HEK293 (cell line): ENCODE measurements at regions of chr19 and their contacts with region 1.

Region 1: DNA sequence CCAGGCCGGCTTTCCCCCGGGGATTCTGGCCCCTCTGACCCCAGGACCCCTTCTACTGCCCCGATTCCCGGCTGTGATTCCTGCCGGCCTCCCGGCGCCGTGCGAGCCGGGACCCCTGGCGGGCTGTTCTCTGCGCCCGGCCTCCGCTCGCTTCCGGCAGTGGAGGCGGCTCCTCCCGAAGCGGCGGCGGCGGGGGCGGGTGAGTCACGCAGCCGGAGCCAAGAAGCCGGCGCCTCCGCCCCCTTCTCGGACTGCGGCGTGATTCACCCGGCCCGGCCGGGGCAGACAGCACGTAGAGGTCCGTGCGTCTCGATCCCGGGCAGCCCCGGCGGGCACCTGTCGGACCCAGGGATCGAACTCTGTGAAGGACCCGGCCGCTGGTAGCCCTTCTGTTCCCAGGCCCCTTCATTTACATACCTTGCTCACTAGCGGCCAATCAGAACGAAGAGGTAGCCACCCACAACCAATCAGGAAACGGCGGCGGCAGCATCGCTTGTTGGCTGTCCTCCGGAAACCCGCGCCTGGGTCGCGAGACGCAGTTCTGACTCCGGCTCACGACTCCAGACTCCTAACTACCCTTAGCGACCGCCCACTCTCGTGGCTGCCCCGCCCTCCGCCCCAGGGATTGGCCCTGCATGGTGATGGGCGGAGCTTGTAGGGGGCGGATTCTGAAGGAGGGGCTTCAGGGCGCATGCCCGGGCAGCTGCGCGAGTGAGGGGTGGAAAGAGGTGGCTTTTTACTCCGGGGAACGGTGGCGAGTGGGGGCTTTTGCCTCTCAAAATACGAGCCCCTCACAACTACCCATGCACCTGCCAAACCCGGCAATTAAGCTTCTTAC is at the start of gene SERTAD1:
- H3K4me3 ChIP-seq: peak within 1 kb of the TSS; percentile 67
- H3K27ac ChIP-seq: peak within 1 kb of the TSS; percentile 97
- H3K4me1 ChIP-seq: peaks cover 19% of the 10 kb centered on the region
- CTCF ChIP-seq: peak; percentile 98

Region 2: GRCh38 chr19:39679056-39679790 is 746.4 kb before region 1 on chr19:
- CTCF ChIA-PET with region 1: no interaction called
- POLR2A ChIA-PET with region 1: no interaction called
- H3K4me3 ChIP-seq: no peak overlapping the region
- H3K27ac ChIP-seq: no peak overlapping the region
- H3K4me1 ChIP-seq: peaks cover 5% of the 10 kb centered on the region; the same call in 1 of the 2 replicates
- CTCF ChIP-seq: no peak

Region 3: DNA sequence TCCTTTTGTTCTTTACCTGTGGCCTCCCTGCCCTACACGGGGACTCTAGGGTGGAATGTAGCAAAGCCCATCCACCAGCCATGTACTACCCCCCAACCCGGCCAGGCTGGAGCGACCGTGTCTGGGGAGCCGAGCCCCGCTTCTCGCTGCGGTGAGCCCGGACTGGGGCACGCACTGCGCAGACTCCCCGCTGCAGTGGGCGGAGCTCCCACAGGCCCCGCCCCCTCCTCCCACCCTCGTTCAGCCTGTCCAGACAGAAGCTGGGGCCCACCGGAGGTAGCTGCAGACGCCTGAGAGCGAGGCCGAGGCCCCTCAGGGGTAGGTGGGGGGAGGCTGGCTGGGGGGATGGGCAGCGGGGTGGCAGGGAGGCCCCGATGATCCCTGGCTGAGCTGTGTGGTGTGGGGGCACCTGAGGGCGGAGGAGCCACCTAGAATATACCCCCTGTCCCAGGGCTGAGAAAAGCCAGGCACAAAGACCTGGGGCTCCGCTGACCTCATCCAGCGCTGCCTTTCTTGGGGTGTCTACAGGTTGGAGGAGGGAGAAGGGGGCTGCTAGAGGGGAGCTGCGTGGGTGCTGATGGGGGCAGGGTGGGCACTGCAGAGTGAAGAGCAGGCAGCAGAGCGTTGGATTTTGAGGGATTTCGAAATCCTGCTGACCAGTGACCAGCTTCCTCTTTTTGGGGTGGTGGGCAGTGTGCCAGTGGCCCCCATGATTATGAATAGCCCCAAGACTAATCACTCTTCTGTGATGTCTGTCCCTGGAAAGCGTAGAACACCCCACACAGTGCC is 59.9 kb before region 1 on chr19:
- CTCF ChIA-PET with region 1: interaction called, 15 read pairs
- POLR2A ChIA-PET with region 1: interaction called, 18 read pairs
- H3K4me3 ChIP-seq: peak overlapping the region; percentile 41
- H3K27ac ChIP-seq: peak overlapping the region; percentile 54; the same call in 1 of the 2 replicates
- H3K4me1 ChIP-seq: peaks cover 27% of the 10 kb centered on the region
- CTCF ChIP-seq: no peak

Region 4: DNA sequence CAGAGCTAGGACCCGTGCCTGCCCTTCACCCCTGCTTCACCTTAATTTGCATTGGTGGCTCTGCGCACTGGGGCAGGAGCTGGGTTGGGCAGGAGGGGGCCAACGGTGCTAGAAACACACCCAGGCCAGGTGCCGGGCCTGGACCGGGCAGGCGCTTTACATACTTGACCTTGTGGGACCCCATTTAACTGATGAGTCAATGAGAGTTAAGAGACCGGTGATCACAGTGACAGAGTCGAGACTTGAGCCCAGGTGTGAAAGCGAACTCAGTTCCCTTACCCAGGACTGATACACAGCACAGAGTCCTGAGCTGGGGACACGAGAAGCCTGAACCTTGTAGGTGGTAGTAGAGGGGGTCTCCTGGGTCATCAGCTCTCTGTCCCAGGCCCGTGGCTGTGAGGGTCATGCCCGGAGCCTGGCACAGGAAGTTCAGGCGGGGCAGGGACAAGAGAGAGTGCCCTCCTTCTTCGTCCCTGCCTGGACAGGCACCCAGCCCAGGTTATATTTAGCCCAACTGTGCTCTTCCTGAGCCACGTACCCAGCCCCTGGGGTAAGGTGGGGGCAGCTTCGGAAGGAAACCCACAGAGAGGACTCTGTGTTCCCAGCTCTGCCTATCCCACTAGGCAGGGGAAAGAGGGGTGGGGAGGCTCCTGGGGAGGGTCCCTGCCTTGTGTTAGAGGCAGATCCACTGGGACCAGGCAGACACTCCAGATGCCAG is 14.4 kb before region 1 on chr19:
- CTCF ChIA-PET with region 1: interaction called, 37 read pairs
- POLR2A ChIA-PET with region 1: interaction called, 38 read pairs
- H3K4me3 ChIP-seq: no peak overlapping the region
- H3K27ac ChIP-seq: no peak overlapping the region
- H3K4me1 ChIP-seq: no peaks in the 10 kb centered on the region
- CTCF ChIP-seq: no peak

Region 5: DNA sequence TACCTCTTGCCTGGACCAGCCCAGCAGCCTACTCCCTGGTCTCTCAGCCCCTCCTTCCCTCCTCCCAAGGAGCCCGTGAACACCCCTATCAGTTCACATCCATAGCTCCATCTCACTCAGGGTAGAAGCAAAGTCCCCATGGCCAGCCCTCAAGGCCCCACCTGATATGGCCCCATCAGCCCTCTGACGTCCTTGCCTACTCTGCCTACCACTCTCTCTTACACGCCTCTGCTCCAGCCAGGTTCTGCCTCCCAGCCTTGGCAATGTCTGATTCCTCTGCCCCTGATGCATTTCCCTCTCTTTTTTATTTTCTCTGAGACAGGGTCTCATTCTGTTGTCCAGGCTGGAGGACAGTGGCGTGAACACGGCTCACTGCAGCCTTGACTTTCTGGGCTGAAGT is 26.3 kb after region 1 on chr19:
- CTCF ChIA-PET with region 1: interaction called, 10 read pairs
- POLR2A ChIA-PET with region 1: interaction called, 428 read pairs
- H3K4me3 ChIP-seq: no peak overlapping the region
- H3K27ac ChIP-seq: no peak overlapping the region
- H3K4me1 ChIP-seq: no peaks in the 10 kb centered on the region
- CTCF ChIP-seq: no peak

Region 6: DNA sequence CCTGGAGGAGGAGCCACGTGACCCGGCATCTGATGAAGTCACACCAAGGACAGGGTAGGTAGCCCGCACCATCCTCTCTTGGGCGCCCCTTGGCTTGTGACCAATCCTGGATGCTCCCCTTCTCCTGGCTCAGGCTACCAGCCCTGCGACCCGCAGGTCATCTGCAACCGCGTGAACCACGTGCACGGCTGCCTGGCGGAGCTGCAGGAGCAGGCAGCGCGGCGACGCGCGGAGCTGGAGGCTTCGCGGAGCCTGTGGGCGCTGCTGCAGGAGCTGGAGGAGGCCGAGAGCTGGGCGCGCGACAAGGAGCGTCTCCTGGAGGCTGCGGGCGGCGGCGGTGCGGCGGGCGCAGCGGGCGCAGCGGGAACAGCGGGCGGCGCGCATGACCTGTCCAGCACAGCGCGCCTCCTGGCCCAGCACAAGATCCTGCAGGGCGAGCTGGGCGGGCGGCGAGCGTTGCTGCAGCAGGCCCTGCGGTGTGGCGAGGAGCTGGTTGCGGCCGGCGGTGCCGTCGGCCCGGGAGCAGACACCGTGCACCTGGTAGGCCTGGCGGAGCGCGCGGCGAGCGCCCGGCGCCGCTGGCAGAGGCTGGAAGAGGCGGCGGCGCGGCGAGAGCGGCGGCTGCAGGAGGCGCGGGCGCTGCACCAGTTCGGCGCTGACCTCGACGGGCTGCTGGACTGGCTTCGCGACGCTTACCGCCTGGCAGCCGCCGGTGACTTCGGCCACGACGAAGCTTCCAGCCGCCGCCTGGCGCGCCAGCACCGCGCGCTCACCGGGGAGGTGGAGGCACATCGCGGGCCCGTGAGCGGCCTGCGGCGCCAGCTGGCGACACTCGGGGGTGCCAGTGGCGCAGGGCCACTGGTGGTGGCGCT is 87.0 kb after region 1 on chr19:
- CTCF ChIA-PET with region 1: interaction called, 5 read pairs
- POLR2A ChIA-PET with region 1: interaction called, 10 read pairs
- H3K4me3 ChIP-seq: no peak overlapping the region
- H3K27ac ChIP-seq: no peak overlapping the region
- H3K4me1 ChIP-seq: no peaks in the 10 kb centered on the region
- CTCF ChIP-seq: no peak

Region 7: DNA sequence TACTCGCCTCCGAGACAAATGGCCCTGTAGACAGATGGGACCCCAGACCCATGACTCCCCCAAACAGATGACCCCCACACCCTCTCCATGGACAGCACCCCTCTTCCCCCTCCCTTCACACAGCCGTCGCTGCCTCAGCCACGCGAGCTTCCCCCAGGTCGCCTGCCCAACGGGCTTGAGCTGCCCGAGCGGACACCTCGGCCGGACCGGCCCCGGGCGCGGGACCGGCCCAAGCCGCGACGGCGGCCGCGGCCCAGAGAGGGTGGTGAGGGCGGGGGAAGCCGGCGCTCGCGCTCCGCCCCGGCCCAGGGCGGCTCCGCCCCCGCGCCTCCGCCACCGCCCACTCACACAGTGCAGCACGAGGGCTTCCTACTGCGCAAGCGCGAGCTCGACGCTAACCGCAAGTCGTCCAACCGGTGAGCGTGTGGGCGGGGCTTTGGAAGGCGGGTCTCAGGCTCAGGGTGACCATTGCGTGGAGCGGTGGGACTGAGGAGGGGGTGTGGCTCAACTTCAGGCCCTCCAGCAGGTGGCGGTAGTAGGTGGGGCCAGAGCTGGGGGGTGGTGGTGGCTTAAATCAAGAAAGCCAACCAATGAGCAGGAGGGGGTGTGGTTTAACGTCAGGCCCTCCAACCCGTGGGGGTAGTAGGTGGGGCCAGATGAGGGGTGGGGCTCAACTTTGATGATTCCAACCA is 144.8 kb after region 1 on chr19:
- CTCF ChIA-PET with region 1: interaction called, 5 read pairs
- POLR2A ChIA-PET with region 1: interaction called, 18 read pairs
- H3K4me3 ChIP-seq: peak overlapping the region; percentile 35
- H3K27ac ChIP-seq: peak overlapping the region; percentile 73
- H3K4me1 ChIP-seq: peaks cover 16% of the 10 kb centered on the region
- CTCF ChIP-seq: peak; percentile 99

Region 8: DNA sequence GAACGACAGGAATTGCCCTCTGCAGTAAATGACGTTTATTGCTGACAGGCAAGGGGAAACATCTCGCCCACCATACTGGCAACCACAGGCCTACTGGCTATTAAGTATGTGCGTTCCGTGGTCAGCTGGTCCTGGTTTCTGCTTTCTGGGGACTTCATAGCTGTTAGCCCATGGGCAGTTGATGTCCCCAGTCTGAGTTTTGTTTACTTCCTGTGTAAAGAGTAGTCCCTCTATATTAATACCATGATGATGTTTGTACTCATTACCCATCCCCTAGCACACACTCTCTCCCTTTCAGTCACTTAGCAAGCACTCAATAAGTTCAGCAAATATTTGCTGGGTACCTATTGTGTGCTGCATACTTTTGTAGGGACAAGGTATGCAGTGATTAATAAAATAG is 343.2 kb after region 1 on chr19:
- CTCF ChIA-PET with region 1: no interaction called
- POLR2A ChIA-PET with region 1: no interaction called
- H3K4me3 ChIP-seq: no peak overlapping the region
- H3K27ac ChIP-seq: peak overlapping the region; percentile 57; the same call in 1 of the 2 replicates
- H3K4me1 ChIP-seq: no peaks in the 10 kb centered on the region
- CTCF ChIP-seq: no peak

Region 9: DNA sequence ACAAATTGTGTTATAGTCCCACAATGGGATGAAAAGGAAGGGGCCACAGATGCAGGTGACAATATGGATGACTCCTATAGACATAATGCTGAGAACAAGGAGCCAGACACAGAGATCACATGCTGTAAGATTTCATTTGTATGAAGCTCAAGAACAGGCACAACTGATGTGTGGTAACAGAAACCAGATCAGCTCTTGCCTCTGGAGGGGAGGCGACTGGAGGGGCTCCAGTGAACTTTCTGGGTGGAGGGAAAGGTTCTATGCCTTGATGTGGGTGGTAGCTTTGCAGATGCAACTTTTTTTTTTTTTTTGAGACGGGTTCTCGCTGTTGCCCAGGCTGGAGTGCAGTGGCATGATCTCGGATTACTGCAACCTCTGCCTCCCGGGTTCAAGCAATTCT is 1539.4 kb after region 1 on chr19:
- CTCF ChIA-PET with region 1: no interaction called
- POLR2A ChIA-PET with region 1: interaction called, 10 read pairs
- H3K4me3 ChIP-seq: no peak overlapping the region
- H3K27ac ChIP-seq: no peak overlapping the region
- H3K4me1 ChIP-seq: 0 out of 2 replicates have a peak, but pooled peaks cover 4% of the 10 kb centered on the region
- CTCF ChIP-seq: no peak